GM18951 (cell line): ENCODE measurements at regions of chr11 and their contacts with region 1.

Region 1: DNA sequence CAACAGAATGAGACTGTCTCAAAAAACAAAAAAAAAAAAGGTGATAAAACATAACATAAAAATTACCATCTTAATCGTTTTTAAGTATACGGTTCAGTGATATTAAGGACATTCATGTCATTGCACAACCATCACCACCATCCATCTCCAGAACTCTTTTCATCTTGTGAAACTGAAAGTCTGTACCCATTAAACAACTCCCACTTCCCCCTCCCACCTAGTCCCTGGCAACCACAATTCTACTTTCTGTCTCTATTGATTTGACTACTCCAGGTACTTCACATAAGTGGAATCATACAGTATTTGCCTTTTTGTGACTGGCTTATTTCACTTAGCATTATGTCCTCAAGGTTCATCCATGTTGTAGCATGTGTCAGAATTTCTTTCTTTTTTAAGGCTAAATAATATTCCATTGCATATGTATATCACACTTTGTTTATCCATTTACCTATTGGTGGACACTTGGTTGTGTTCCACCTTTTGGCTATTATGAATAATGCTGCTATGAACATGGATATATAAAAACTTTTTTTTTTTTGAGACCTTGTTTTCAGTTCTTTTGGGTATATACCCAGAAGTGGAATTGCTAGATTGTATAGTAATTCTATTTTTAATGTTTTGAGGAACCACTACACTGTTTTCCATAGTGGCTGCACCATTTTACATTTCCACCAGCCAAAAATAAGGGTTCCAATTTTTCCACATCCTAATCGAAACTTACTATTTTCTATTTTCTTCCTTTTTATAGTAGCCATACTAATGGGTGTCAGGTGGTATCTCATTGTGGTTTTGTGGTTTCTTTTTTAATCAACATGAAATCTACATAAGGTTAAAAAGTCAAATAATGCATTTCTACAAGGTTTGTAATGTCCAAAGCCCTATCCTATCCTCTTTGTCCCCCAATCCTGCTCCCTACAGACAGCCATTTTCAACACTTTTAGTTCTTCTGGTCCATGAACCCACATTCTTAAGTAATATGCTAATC is 23.4 kb upstream of the PIK3C2A start:
- POLR2A ChIP-seq: no peak

Region 2: DNA sequence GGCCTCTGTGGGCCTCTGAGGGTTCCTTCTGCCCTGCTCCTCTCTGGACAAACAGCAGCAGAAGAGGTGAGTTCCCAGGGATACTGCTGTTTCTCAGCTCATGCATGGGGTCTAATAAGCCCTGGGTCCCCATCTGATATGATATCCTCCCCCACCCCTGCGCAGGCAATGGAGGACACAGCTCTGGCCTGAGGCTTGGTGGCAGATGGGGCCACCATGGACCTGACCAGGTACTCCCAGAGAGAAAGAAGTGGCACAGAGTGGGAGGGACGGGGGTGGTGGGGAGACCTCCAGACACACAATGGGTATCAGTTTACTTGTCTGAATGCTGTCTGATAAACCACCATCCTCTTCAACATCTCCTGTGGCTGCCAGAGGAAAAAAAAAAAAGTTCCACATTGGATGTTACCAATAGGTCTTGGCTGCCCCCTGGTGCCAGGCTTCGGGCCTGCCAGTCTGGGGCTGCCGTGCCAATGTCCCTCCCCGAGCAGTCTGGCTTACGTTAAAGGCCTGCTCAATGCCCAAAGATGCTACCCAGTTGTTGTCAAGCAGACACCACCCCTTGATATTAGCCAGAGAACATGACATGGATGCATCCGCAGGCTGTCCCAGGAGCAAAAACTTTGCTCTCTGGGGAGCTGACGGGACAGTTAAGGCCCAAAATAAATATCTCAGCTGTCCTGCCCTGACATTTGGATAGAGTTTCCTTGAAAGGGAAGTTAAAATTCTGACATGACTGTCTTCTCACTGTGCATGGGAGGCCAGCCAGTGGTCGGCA is 273.4 kb after region 1 on chr11:
- in situ Hi-C with region 1: loop called (anchors 25 kb)
- POLR2A ChIP-seq: no peak